ENCODE measurements at regions of chr1 and their contacts with region 1.

Region 1: GRCh38 chr1:24201941-24202440 is 14.9 kb upstream of the IFNLR1 start:
- DNase-seq: peak; percentile 90
- H3K4me3 ChIP-seq: no peak overlapping the region
- H3K27ac ChIP-seq: no peak overlapping the region
- H3K4me1 ChIP-seq: peaks cover 2% of the 10 kb centered on the region
- H3K27me3 ChIP-seq: no peaks in the 10 kb centered on the region
- CTCF ChIP-seq: peak; percentile 68 to 88
- POLR2A ChIP-seq: no peak

Region 2: GRCh38 chr1:23613191-23614031 is 588.6 kb before region 1 on chr1:
- CTCF ChIA-PET with region 1: no interaction called
- POLR2A ChIA-PET with region 1: no interaction called
- dilution Hi-C with region 1: no loop called
- intact Hi-C with region 1: no loop called
- DNase-seq: no peak
- H3K4me3 ChIP-seq: no peak overlapping the region
- H3K27ac ChIP-seq: no peak overlapping the region
- H3K4me1 ChIP-seq: no peaks in the 10 kb centered on the region
- H3K27me3 ChIP-seq: peaks cover 11 to 12% of the 10 kb centered on the region in 2 experiments
- CTCF ChIP-seq: no peak
- POLR2A ChIP-seq: no peak

Region 3: GRCh38 chr1:23809751-23810171 is 392.2 kb before region 1 on chr1:
- CTCF ChIA-PET with region 1: no interaction called
- POLR2A ChIA-PET with region 1: no interaction called
- dilution Hi-C with region 1: no loop called
- intact Hi-C with region 1: no loop called
- DNase-seq: peak; percentile 74
- H3K4me3 ChIP-seq: no peak overlapping the region
- H3K27ac ChIP-seq: no peak overlapping the region
- H3K4me1 ChIP-seq: no peaks in the 10 kb centered on the region
- H3K27me3 ChIP-seq: no peaks in the 10 kb centered on the region
- CTCF ChIP-seq: peak; percentile 88 to 91
- POLR2A ChIP-seq: no peak

Region 4: GRCh38 chr1:24070821-24071393 is 131.1 kb before region 1 on chr1:
- CTCF ChIA-PET with region 1: interaction called, 12 read pairs
- POLR2A ChIA-PET with region 1: no interaction called
- dilution Hi-C with region 1: no loop called
- intact Hi-C with region 1: loop called (anchors 2 kb)
- DNase-seq: peak; percentile 77
- H3K4me3 ChIP-seq: no peak overlapping the region
- H3K27ac ChIP-seq: no peak overlapping the region
- H3K4me1 ChIP-seq: no peaks in the 10 kb centered on the region
- H3K27me3 ChIP-seq: peaks cover 0 to 3% of the 10 kb centered on the region in 2 experiments
- CTCF ChIP-seq: peak; percentile 85 to 93
- POLR2A ChIP-seq: no peak

Region 5: DNA sequence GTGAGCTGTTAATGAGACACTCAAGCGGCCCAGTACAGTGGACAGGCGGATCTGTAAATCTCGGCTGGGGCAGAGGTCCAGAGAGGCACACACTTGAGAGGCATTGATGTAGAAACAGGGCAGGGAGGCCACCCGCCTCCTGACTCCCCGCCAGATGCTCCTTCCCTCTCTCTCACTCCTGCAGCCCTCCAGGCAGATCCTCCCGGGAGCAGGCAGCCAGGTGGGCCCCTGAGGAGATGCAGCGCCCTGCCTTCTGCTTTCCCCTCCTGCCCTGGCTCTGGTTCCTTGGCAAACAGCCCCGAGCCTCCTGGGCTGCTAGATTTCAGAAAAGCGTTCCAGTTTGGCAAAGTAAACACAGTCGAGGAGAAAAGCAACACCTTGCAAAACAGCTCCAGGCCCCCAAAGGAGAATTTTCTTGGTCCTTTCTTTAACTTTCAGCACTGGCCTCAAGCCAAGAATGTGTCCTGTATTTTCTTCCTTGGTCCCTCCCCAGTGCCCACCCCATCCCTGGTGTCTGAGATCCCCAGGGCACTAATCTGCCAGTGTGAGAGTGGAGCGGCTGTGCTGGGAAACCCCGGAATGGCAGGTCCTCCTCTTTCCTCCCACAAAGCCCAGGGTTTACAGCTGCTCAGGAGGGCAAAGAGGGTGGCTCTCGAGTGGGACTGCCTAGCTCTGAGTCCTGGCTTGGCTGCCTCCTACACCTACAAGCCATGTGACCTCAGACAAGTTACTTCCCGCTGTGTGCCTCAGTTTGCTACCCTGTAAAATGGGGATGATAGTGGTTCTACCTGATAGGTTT is 14.5 kb after region 1 on chr1:
- CTCF ChIA-PET with region 1: interaction called, 10 read pairs
- POLR2A ChIA-PET with region 1: no interaction called
- dilution Hi-C with region 1: no loop called
- intact Hi-C with region 1: no loop called
- DNase-seq: no peak
- H3K4me3 ChIP-seq: no peak overlapping the region
- H3K27ac ChIP-seq: no peak overlapping the region
- H3K4me1 ChIP-seq: no peaks in the 10 kb centered on the region
- H3K27me3 ChIP-seq: peaks cover 0 to 8% of the 10 kb centered on the region in 2 experiments
- CTCF ChIP-seq: no peak
- POLR2A ChIP-seq: no peak

Region 6: DNA sequence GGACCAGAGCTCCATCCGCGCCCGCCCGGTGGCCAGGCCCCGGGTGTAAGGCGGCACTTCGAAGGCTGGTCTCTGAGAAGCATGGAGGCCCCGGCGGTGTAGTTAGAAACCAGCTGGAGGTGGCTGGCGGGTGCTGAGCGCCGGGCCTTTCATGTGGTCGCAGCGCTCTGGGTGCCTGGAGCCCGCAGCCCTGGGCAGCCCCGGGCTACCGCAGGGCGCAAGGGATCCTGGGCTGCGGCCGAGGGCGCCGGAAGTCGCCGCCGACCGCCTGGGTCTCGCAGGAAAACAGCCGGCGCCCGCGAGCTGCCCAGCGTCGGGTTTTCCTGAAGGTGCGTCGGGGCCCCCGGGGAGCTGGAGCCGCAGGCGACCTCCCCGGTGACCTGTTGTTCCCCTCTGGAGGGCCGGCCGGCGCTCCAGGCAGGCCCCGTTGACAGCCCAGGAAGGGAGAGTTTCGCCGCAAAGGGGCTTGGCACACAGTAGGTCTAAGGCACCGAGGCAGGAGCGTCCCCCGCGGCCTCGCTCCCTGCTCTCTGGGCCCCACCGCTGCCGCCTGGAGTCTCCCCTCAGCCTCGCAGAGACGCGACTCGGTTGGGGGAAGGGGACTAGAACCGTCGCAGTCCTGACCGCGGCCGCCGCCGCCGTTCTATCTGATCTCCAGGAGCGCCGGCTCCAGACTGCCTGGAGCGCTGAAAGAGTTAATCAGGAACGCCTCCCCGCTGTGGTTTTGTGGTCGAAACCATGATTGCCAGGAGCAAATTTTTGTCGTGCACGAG is 119.9 kb after region 1 on chr1:
- CTCF ChIA-PET with region 1: interaction called, 13 read pairs
- POLR2A ChIA-PET with region 1: no interaction called
- dilution Hi-C with region 1: no loop called
- intact Hi-C with region 1: no loop called
- DNase-seq: peak; percentile 11
- H3K4me3 ChIP-seq: peak overlapping the region in 2 of 3 experiments; percentile 2 to 20
- H3K27ac ChIP-seq: no peak overlapping the region
- H3K4me1 ChIP-seq: peaks cover 5% of the 10 kb centered on the region
- H3K27me3 ChIP-seq: peaks cover 68 to 87% of the 10 kb centered on the region in 2 experiments
- CTCF ChIP-seq: no peak
- POLR2A ChIP-seq: no peak

Region 7: GRCh38 chr1:24385160-24385940 is 183.4 kb after region 1 on chr1:
- CTCF ChIA-PET with region 1: interaction called, 736 read pairs
- POLR2A ChIA-PET with region 1: no interaction called
- dilution Hi-C with region 1: no loop called
- intact Hi-C with region 1: no loop called
- DNase-seq: no peak
- H3K4me3 ChIP-seq: no peak overlapping the region
- H3K27ac ChIP-seq: no peak overlapping the region
- H3K4me1 ChIP-seq: peaks cover 23% of the 10 kb centered on the region
- H3K27me3 ChIP-seq: no peaks in the 10 kb centered on the region
- CTCF ChIP-seq: peak; percentile 46 to 61
- POLR2A ChIP-seq: no peak

Region 8: GRCh38 chr1:24415334-24415909 is 213.4 kb after region 1 on chr1 and contains the start of gene NIPAL3:
- CTCF ChIA-PET with region 1: interaction called, 35 read pairs
- POLR2A ChIA-PET with region 1: interaction called, 3 read pairs
- dilution Hi-C with region 1: no loop called
- intact Hi-C with region 1: no loop called
- DNase-seq: peak; percentile 98
- H3K4me3 ChIP-seq: peak within 1 kb of the TSS; percentile 66 to 91 (median 70)
- H3K27ac ChIP-seq: no peak within 1 kb of the TSS
- H3K4me1 ChIP-seq: peaks cover 20% of the 10 kb centered on the region
- H3K27me3 ChIP-seq: no peaks in the 10 kb centered on the region
- CTCF ChIP-seq: peak; percentile 61 to 93
- POLR2A ChIP-seq: peak; percentile 35
- total RNA-seq, gene NIPAL3: 14.8 and 16.0 TPM in 2 replicates

Region 9: DNA sequence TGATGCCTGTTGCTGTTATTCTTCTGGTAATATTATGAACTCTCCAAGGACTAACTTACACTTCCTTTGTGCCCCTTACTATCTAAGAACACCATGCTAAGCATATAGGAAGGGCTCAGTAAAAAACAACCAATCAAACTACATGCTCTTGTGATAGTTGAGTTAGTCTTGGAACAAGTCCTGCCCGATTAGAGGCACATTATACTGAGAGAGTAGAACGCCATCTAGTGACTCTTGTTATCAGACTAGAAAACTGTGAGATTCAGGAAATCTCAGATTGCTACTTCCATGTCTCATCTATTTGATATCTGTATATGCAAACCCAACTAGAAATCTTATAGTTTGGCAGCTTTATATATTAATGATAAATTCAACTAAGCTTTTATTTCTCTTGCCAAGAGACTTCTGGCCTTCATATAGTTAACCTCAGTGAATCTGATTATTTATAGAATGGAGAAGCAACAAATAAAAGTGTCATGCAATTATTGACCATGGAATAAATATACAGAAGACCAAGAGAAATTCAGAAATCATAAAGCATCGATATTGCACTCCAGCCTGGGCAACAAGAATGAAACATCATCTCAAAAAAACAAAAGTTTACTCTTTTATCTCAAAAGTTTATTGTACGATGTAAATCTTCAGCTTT is 433.3 kb after region 1 on chr1:
- CTCF ChIA-PET with region 1: interaction called, 128 read pairs
- POLR2A ChIA-PET with region 1: no interaction called
- dilution Hi-C with region 1: no loop called
- intact Hi-C with region 1: loop called (anchors 1 kb)
- DNase-seq: peak; percentile 79
- H3K4me3 ChIP-seq: no peak overlapping the region
- H3K27ac ChIP-seq: no peak overlapping the region
- H3K4me1 ChIP-seq: no peaks in the 10 kb centered on the region
- H3K27me3 ChIP-seq: peaks cover 8 to 14% of the 10 kb centered on the region in 2 experiments
- CTCF ChIP-seq: peak; percentile 36 to 44
- POLR2A ChIP-seq: no peak

Measured in endothelial cell of umbilical vein (primary cell).